ENCODE measurements at regions of chr12 and their contacts with region 1.

Region 1: GRCh38 chr12:120580787-120581723 is at the start of gene POP5:
- DNase-seq: peak; percentile 95
- H3K4me3 ChIP-seq: peak within 1 kb of the TSS; percentile 88
- CTCF ChIP-seq: no peak

Region 2: DNA sequence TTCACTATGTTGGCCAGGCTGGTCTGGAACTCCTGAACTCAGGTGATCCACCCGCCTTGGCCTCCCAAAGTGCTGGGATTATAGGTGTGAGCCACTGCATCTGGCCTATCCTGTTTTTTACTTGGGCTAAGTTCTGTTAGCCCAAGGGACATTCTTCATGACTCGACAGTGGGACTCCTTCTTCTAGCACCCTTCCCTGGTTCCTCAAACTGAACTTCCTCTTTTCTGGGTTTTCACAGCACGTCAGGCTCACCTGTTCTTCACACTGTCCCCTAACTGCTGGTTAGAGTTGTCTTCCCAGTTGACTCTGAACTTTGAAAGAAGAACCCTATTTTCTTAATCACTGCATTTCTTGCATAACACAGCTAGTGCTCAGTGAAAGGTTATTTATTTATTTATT is 81.8 kb after region 1 on chr12:
- in situ Hi-C with region 1: no loop called
- DNase-seq: no peak
- H3K4me3 ChIP-seq: no peak overlapping the region
- CTCF ChIP-seq: no peak

Region 3: DNA sequence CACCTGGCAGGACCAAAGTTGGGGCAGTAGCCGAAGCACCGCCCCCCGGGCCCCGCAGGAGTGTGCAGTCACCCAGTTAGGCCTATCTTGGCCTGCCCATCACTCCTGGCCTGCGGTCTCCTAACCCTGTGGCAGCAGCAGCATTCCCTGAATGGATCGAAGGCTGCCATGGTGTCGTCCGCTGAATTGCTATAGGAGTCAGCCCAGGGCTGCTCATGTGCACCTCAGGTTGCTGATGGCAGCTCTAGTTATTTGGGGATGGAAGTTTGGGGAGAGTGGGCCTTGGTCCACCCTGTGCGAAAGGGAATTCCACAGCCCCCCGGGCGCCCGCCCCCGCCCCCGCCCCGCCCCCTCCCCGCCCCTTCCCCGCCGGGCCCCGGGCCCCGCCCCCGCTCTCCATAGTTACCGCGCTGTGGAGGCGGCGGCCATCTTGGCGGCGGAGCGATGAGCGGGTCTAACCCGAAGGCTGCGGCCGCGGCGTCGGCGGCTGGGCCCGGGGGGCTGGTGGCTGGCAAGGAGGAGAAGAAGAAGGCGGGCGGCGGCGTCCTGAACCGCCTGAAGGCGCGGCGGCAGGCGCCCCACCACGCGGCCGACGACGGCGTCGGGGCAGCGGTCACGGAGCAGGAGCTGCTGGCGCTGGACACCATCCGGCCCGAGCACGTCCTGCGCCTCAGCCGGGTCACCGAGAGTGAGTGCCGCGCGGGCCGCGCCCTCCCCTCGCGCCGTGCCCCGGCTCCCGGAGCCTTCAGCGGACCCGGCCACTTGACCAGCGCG is 129.2 kb after region 1 on chr12 and contains the start of gene UNC119B:
- in situ Hi-C with region 1: loop called (anchors 25 kb)
- DNase-seq: no peak
- H3K4me3 ChIP-seq: peak within 1 kb of the TSS; percentile 86
- CTCF ChIP-seq: no peak